ENCODE measurements at regions of chr16 and their contacts with region 1.

Region 1: GRCh38 chr16:48576927-48577326 is 33.1 kb downstream of the N4BP1 start:
- DNase-seq: no peak
- ATAC-seq: peak; percentile 78
- H3K4me3 ChIP-seq: no peak overlapping the region
- H3K4me3 Mint-ChIP-seq: peak overlapping the region in 7 of 10 donors; percentile 2 to 46 (median 12)
- H3K27ac ChIP-seq: no peak overlapping the region
- H3K27ac Mint-ChIP-seq: peak overlapping the region in 5 of 9 donors; percentile 1 to 86 (median 28)
- H3K4me1 ChIP-seq: peaks cover 12 to 28% of the 10 kb centered on the region in 2 donors
- H3K4me1 Mint-ChIP-seq: peaks cover 51 to 87% (median 77%) of the 10 kb centered on the region in 7 donors
- H3K27me3 ChIP-seq: no peaks in the 10 kb centered on the region
- H3K27me3 Mint-ChIP-seq: no peaks in the 10 kb centered on the region

Region 2: DNA sequence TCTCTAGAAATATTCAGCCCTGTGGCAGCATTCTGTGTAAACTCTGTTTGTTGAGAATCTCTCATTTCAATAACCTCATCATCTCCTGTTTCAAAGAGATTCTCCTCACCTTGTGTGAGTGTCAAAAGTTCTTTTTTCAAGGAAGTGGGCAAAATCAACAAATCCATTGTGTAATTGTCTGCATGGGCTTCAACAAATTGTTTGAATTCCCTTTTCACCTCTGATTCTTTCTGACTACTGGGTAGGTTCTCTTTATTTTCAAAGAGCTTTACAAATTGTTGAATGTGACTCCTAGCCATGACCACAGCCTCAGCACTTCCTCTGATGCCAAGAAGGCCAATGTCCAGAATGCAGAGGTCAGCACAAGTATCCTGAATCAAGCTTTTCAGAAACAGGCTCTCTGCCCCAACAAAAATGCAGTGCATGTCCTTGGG is 14.9 kb before region 1 on chr16:
- CTCF ChIA-PET with region 1: no interaction called
- POLR2A ChIA-PET with region 1: interaction called, 4 read pairs
- intact Hi-C with region 1: loop called in 1 of 2 experiments (anchors 2 kb)
- DNase-seq: no peak
- ATAC-seq: peak; percentile 30
- H3K4me3 ChIP-seq: no peak overlapping the region
- H3K4me3 Mint-ChIP-seq: peak overlapping the region in 2 of 10 donors; percentile 7 to 17
- H3K27ac ChIP-seq: no peak overlapping the region
- H3K27ac Mint-ChIP-seq: peak overlapping the region in 5 of 9 donors; percentile 12 to 83 (median 52)
- H3K4me1 ChIP-seq: peaks cover 13 to 14% of the 10 kb centered on the region in 2 donors
- H3K4me1 Mint-ChIP-seq: peaks cover 28 to 94% (median 83%) of the 10 kb centered on the region in 7 donors
- H3K27me3 ChIP-seq: no peaks in the 10 kb centered on the region
- H3K27me3 Mint-ChIP-seq: no peaks in the 10 kb centered on the region

Region 3: DNA sequence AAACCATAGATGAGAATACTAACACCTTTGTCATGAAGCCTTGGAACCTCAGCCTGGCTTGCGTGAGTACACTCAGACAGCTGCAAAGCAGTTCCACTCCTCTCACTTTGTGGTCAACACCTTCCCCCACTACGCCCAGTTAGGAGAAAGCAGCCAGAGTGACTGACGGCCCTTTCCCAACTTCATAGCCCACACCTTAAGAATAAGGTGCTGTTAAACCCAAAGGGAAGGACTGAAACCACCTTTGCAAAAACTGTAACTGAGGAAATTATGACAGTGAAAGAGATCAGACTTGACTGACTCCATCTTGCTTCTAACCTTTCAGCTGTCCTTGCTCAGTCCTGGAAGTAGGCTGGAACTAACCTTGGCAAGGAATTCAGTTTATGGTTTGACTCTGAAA is 19.4 kb after region 1 on chr16:
- CTCF ChIA-PET with region 1: no interaction called
- POLR2A ChIA-PET with region 1: no interaction called
- intact Hi-C with region 1: loop called in 1 of 2 experiments (anchors 2 kb)
- DNase-seq: peak in 1 of 9 donors; percentile 61
- ATAC-seq: peak; percentile 56
- H3K4me3 ChIP-seq: no peak overlapping the region
- H3K4me3 Mint-ChIP-seq: peak overlapping the region in 5 of 10 donors; percentile 16 to 47 (median 40)
- H3K27ac ChIP-seq: no peak overlapping the region
- H3K27ac Mint-ChIP-seq: peak overlapping the region in 5 of 9 donors; percentile 7 to 80 (median 72)
- H3K4me1 ChIP-seq: peaks cover 22 to 35% of the 10 kb centered on the region in 2 donors
- H3K4me1 Mint-ChIP-seq: peaks cover 36 to 74% (median 59%) of the 10 kb centered on the region in 7 donors
- H3K27me3 ChIP-seq: no peaks in the 10 kb centered on the region
- H3K27me3 Mint-ChIP-seq: no peaks in the 10 kb centered on the region

Measured in naive thymus-derived CD4-positive, alpha-beta T cell (primary cell).